Activated CD4-positive, alpha-beta T cell treated with anti-CD3 and anti-CD28 coated beads, Interleukin-2, amount 10 ng/mL, durations not matched to agents 24 days and 14 days (primary cell): ENCODE measurements at regions of chr2 and their contacts with region 1.

Region 1: GRCh38 chr2:7773362-7774360 is 856.4 kb downstream of the RNF144A start:
- DNase-seq: peak; percentile 79
- H3K4me3 Mint-ChIP-seq: peak overlapping the region; percentile 25
- H3K27ac Mint-ChIP-seq: peak overlapping the region; percentile 84
- H3K4me1 Mint-ChIP-seq: peaks cover 36% of the 10 kb centered on the region
- H3K27me3 Mint-ChIP-seq: no peaks in the 10 kb centered on the region

Region 2: GRCh38 chr2:7567646-7568045 is 206.0 kb before region 1 on chr2:
- intact Hi-C with region 1: loop called (anchors 2 kb)
- DNase-seq: peak; percentile 89
- H3K4me3 Mint-ChIP-seq: peak overlapping the region; percentile 65
- H3K27ac Mint-ChIP-seq: peak overlapping the region; percentile 97
- H3K4me1 Mint-ChIP-seq: peaks cover 58% of the 10 kb centered on the region
- H3K27me3 Mint-ChIP-seq: no peaks in the 10 kb centered on the region

Region 3: DNA sequence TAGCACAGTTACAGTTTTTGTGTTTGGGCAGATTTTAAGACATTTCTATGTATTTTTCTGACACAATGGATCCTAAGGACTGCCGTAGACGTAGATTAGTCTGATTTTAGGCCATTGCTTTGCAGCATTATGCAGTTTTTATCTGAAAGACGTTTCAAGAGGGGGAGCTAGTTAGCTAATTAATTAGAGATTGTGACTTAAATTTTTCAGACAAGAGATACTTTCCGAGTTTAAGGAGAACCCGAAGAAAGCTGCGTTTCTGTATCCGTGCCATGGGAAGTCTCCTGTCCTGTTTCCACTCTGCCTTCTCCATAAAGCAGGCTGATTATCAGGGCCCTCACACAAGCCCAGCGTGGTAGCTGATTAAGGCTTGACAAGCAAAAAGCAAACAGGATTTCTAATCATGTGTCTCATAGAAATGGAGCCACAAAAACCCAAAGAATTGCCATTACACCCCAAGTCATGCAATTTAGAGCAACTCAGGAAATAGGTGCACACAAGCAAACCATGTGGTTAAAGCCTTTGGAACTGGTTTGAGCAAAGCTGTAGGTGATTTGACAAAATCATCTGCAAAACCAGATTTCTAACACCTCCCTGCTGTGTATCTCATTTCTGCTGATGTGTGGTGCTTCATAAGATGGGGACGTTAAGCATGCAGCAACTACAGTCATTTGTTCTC is 48.4 kb before region 1 on chr2:
- intact Hi-C with region 1: loop called (anchors 1 kb)
- DNase-seq: peak; percentile 88
- H3K4me3 Mint-ChIP-seq: peak overlapping the region; percentile 87
- H3K27ac Mint-ChIP-seq: peak overlapping the region; percentile 92
- H3K4me1 Mint-ChIP-seq: peaks cover 53% of the 10 kb centered on the region
- H3K27me3 Mint-ChIP-seq: no peaks in the 10 kb centered on the region

Region 4: DNA sequence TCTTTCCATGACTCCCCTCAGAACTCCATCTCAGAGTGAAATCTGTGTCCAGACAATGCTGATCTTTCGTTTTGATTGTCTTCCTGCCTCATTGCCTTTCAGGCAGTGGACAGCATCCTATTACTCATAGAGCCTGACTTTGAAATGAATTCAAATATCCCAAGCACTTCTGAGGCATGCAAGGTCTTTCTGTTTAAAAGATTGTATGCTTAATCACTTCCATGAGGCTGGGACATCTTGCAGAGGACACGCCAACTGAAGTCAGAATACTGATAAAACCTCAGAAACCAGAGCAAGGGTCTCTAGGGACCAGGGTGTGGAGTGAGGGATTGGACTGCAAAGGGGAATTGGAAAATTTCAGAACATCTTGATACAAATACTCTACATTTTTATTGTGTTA is 71.7 kb after region 1 on chr2:
- intact Hi-C with region 1: loop called (anchors 1 kb)
- DNase-seq: peak; percentile 52
- H3K4me3 Mint-ChIP-seq: no peak overlapping the region
- H3K27ac Mint-ChIP-seq: peak overlapping the region; percentile 76
- H3K4me1 Mint-ChIP-seq: peaks cover 42% of the 10 kb centered on the region
- H3K27me3 Mint-ChIP-seq: no peaks in the 10 kb centered on the region

Region 5: GRCh38 chr2:8152392-8153257 is 379.0 kb after region 1 on chr2:
- intact Hi-C with region 1: loop called (anchors 10 kb)
- DNase-seq: peak; percentile 49
- H3K4me3 Mint-ChIP-seq: no peak overlapping the region
- H3K27ac Mint-ChIP-seq: peak overlapping the region; percentile 12
- H3K4me1 Mint-ChIP-seq: peaks cover 26% of the 10 kb centered on the region
- H3K27me3 Mint-ChIP-seq: no peaks in the 10 kb centered on the region